Activated T-helper 2 cell treated with anti-CD3 and anti-CD28 coated beads, Interferon-gamma antibody, Interleukin-2, Interleukin-4, amounts not matched to agents 10 μg/mL and 5 μg/mL and 100 μg/mL, durations not matched to agents 14 hours and 24 hours and 36 hours (primary cell): ENCODE measurements at regions of chr1 and their contacts with region 1.

Region 1: GRCh38 chr1:116934586-116935207 is 25.0 kb downstream of the PTGFRN start:
- DNase-seq: no peak
- H3K4me3 Mint-ChIP-seq: no peak overlapping the region
- H3K27ac Mint-ChIP-seq: peak overlapping the region; percentile 23
- H3K4me1 Mint-ChIP-seq: peaks cover 34% of the 10 kb centered on the region
- H3K27me3 Mint-ChIP-seq: no peaks in the 10 kb centered on the region

Region 2: GRCh38 chr1:115062542-115063011 is 1872.1 kb before region 1 on chr1:
- intact Hi-C with region 1: loop called (anchors 5 kb)
- DNase-seq: peak; percentile 92
- H3K4me3 Mint-ChIP-seq: no peak overlapping the region
- H3K27ac Mint-ChIP-seq: peak overlapping the region; percentile 93
- H3K4me1 Mint-ChIP-seq: peaks cover 36% of the 10 kb centered on the region
- H3K27me3 Mint-ChIP-seq: no peaks in the 10 kb centered on the region

Region 3: DNA sequence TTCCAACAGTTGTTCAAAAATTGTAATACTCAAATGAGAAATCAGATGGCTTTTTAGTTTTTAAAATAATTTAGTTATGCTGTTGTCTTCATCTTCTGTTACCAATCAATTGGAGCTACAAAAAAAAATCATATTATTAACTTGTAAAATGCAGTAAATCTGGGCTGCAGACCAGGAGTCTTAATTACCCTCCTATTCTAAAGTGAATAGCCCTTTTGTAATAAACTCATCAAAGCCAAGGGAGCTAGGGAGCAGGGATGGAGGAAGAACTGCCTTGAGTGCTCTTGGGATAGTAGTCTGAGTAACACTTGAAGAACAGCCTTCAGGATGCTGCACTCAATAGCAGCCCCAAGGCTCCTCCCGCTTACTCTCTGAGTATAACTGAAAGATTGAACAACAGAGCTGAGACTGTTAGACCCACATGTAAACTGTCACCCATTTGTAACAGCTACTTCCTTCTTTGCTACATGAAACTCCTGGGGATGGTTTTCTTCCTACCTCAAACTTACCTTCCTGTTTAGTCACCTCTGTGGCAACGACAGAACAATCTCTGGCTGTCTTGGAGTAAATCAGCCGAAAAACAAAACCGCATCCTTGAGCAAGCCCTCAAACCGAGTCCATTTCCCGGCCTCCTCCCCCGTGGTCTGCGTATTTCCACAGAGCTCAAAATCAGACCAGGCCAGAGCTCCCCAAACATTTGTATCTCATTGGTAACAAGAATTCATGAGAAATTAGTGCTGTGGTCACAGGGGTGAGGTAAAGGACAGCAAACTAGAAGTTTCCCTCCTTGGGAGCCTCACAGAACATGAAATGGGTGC is 419.8 kb before region 1 on chr1:
- intact Hi-C with region 1: loop called (anchors 10 kb)
- DNase-seq: peak; percentile 68
- H3K4me3 Mint-ChIP-seq: peak overlapping the region; percentile 50
- H3K27ac Mint-ChIP-seq: peak overlapping the region; percentile 94
- H3K4me1 Mint-ChIP-seq: peaks cover 63% of the 10 kb centered on the region
- H3K27me3 Mint-ChIP-seq: no peaks in the 10 kb centered on the region

Region 4: DNA sequence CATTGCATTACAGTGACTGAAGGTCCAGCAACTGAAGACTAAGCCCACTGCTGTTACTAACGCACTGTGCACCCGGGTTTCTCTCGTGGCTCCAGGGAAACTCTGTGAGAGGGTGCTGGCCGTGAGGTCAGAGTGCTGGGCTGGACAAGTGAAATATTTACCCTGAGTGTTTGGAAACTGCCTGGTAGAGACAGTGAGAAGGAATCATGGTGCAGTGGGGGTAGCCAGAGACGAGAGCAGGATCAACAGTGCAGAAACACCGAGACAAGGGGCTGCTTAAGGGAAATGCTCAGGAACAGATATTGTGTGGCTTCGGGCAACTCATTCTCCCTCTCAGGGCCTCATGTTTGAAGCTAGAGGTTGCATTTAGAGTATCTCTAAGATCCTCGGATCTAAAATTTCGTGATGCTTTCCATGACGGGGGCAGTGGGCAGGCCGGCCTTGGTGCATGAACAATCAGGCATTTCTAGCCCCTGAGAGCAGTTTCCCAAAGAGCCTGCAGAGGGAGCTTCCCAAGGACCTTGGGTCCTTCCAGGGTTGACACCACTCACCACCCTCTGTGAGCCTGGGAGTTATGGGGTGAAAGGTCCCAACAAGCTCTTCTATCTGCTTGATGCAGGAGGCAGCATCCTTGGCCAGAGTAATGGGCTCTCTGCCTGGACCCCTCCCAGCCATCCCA is 170.8 kb before region 1 on chr1:
- intact Hi-C with region 1: loop called (anchors 2 kb)
- DNase-seq: no peak
- H3K4me3 Mint-ChIP-seq: peak overlapping the region; percentile 84
- H3K27ac Mint-ChIP-seq: peak overlapping the region; percentile 100
- H3K4me1 Mint-ChIP-seq: peaks cover 88% of the 10 kb centered on the region
- H3K27me3 Mint-ChIP-seq: no peaks in the 10 kb centered on the region

Region 5: DNA sequence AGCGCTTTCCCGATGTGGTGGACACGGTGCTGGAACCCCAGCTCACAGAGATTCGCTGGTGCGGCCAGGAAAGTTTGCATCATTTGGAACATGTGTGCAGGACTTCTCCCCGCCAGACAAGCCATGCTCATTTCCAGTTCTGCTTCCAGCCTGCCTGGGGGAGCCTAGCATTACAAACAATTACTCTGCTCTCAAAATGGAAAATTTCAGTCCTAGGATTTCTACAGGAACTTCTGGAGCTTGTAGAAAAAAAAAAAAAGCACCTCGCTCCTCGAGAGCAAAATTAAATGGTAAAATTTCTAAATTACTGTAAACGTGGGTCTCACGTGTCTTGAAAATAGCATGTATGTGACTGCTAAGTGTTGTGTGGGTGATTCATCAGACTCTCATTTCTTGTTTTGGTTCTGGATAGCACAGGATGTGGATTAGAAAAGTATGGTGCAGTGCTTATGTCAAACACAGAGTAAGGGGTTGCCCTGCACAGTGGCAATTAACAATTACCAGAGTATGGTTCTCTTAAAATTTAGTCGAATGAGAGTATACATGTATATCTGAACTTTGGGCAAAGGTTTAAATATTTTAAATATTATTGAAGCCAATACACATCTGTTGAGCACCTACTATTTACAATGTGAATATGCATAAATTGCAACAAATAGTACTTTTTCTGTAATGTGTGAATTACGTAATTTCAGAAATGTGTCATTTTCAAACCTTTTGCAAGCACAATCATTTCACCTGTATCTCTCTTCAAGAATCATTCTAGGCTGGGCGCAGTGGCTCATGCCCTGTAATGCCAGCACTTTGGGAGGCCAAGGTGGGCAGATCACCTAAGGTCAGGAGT is 86.8 kb before region 1 on chr1:
- intact Hi-C with region 1: loop called (anchors 2 kb)
- DNase-seq: no peak
- H3K4me3 Mint-ChIP-seq: no peak overlapping the region
- H3K27ac Mint-ChIP-seq: peak overlapping the region; percentile 11
- H3K4me1 Mint-ChIP-seq: peaks cover 22% of the 10 kb centered on the region
- H3K27me3 Mint-ChIP-seq: no peaks in the 10 kb centered on the region

Region 6: DNA sequence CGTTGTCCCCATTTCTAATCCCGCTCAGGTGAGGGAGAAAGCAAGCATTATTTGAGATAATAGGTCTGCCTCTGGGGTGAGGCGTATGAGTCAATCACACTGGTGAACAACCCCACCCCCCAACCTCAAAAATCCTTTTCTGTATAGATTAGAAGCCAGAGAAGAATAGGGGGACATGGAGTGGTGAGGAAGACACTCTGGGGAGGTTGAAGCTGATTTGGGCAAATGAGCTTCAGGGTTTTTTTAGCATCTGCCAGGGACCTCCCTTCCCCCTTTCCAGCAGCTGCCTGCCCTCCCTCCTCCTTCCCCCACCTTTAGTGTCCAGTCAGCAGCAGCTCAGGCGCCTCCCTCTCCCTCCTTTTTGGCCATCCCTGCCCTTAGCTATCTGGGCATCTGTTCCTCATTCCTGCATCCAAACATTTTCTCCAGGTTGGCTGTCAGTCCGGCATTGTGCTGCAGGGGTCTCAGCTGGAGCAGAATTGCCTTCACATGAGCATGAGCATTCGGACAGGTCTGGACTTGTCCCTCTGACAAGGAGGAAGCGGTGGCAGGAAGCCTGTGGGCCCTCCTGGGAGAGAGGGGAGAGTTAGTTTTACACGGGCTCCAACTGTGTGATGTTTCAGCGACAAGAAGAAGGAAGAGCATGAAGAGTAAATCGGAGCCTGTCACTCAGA is 55.8 kb before region 1 on chr1:
- intact Hi-C with region 1: loop called (anchors 1 kb)
- DNase-seq: no peak
- H3K4me3 Mint-ChIP-seq: no peak overlapping the region
- H3K27ac Mint-ChIP-seq: no peak overlapping the region
- H3K4me1 Mint-ChIP-seq: peaks cover 32% of the 10 kb centered on the region
- H3K27me3 Mint-ChIP-seq: no peaks in the 10 kb centered on the region

Region 7: DNA sequence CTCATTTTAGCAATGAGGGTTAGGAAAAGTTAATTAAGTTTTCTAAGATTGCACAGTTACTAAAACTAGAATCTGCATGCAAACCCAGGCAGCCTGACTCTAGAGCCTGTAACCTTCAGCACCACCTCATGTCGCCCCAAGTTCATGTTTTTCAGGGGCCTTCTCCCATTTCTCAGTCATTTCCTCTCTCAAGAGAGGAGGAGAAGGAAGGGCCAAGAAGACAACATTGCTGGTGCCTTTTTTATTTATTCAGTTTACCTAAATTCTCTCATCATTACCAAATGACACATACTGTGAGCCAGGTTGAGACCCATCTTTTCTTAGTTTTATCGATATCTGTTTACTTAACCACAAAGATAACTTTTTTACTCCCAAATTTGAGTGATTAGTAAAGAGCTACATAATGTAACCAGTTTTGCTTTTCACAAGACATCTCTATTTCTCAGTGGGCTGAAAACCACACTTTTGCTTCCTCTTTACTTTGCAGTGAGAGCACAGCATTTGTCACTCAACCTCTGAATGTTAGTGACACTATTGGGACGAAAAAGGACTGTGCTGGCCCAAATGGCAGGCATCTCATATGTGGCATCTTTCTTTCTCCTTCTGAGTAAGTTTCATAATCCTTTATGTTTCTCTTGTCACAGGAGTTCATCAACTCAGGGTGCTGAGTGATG is 66.7 kb after region 1 on chr1 and contains the start of gene CD101:
- intact Hi-C with region 1: loop called (anchors 1 kb)
- DNase-seq: no peak
- H3K4me3 Mint-ChIP-seq: peak within 1 kb of the TSS; percentile 31
- H3K27ac Mint-ChIP-seq: peak within 1 kb of the TSS; percentile 46
- H3K4me1 Mint-ChIP-seq: peaks cover 37% of the 10 kb centered on the region
- H3K27me3 Mint-ChIP-seq: peaks cover 9% of the 10 kb centered on the region
- total RNA-seq, gene CD101: 0.18 and 0.25 TPM in 2 replicates

Region 8: GRCh38 chr1:117210831-117211261 is 276.1 kb after region 1 on chr1 and contains the start of gene VTCN1:
- intact Hi-C with region 1: no loop called
- DNase-seq: no peak
- H3K4me3 Mint-ChIP-seq: no peak within 1 kb of the TSS
- H3K27ac Mint-ChIP-seq: no peak within 1 kb of the TSS
- H3K4me1 Mint-ChIP-seq: no peaks in the 10 kb centered on the region
- H3K27me3 Mint-ChIP-seq: peaks cover 3% of the 10 kb centered on the region
- total RNA-seq, gene VTCN1: not detected in 2 replicates